CD8-positive, alpha-beta T cell (primary cell): ENCODE measurements at regions of chr10 and their contacts with region 1.

Region 1: GRCh38 chr10:119445311-119445934 is 97.1 kb downstream of the RGS10 start:
- DNase-seq: peak; percentile 67 to 93 (median 85)
- ATAC-seq: peak; percentile 80
- H3K4me3 ChIP-seq: no peak overlapping the region
- H3K4me3 Mint-ChIP-seq: no peak overlapping the region
- H3K27ac ChIP-seq: no peak overlapping the region
- H3K27ac Mint-ChIP-seq: peak overlapping the region; percentile 66
- H3K4me1 ChIP-seq: peaks cover 10% of the 10 kb centered on the region
- H3K4me1 Mint-ChIP-seq: peaks cover 11% of the 10 kb centered on the region
- H3K27me3 ChIP-seq: no peaks in the 10 kb centered on the region
- H3K27me3 Mint-ChIP-seq: no peaks in the 10 kb centered on the region
- CTCF ChIP-seq: peak; percentile 81

Region 2: GRCh38 chr10:118993214-118993613 is 452.2 kb before region 1 on chr10:
- CTCF ChIA-PET with region 1: no interaction called
- POLR2A ChIA-PET with region 1: no interaction called
- intact Hi-C with region 1: no loop called
- DNase-seq: no peak
- ATAC-seq: no peak
- H3K4me3 ChIP-seq: no peak overlapping the region
- H3K4me3 Mint-ChIP-seq: no peak overlapping the region
- H3K27ac ChIP-seq: no peak overlapping the region
- H3K27ac Mint-ChIP-seq: no peak overlapping the region
- H3K4me1 ChIP-seq: no peaks in the 10 kb centered on the region
- H3K4me1 Mint-ChIP-seq: no peaks in the 10 kb centered on the region
- H3K27me3 ChIP-seq: no peaks in the 10 kb centered on the region
- H3K27me3 Mint-ChIP-seq: peaks cover 3% of the 10 kb centered on the region
- CTCF ChIP-seq: no peak

Region 3: DNA sequence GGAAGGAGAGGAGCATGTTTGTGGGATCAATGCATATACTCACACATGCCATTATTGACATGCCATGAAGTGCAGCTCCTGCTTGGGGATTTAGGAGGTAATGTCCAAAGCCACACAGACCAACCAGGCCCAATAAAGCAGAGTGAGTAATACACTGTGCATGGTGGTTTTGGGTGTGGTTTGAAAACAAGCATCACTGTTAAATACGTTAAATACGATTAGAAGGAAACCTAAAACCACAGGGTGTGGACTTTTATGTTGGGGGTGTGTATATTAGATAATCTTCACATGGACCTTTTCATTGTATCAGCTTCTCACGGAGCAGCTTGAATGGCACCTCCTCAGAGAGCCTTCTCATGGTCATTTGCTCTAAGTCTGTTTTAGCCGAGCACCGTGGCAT is 354.5 kb before region 1 on chr10:
- CTCF ChIA-PET with region 1: no interaction called
- POLR2A ChIA-PET with region 1: no interaction called
- intact Hi-C with region 1: no loop called
- DNase-seq: peak; percentile 12 to 88 (median 47)
- ATAC-seq: peak; percentile 81
- H3K4me3 ChIP-seq: no peak overlapping the region
- H3K4me3 Mint-ChIP-seq: peak overlapping the region; percentile 54
- H3K27ac ChIP-seq: peak overlapping the region; percentile 51 to 55
- H3K27ac Mint-ChIP-seq: peak overlapping the region; percentile 95
- H3K4me1 ChIP-seq: peaks cover 18% of the 10 kb centered on the region
- H3K4me1 Mint-ChIP-seq: peaks cover 31% of the 10 kb centered on the region
- H3K27me3 ChIP-seq: no peaks in the 10 kb centered on the region
- H3K27me3 Mint-ChIP-seq: no peaks in the 10 kb centered on the region
- CTCF ChIP-seq: no peak

Region 4: DNA sequence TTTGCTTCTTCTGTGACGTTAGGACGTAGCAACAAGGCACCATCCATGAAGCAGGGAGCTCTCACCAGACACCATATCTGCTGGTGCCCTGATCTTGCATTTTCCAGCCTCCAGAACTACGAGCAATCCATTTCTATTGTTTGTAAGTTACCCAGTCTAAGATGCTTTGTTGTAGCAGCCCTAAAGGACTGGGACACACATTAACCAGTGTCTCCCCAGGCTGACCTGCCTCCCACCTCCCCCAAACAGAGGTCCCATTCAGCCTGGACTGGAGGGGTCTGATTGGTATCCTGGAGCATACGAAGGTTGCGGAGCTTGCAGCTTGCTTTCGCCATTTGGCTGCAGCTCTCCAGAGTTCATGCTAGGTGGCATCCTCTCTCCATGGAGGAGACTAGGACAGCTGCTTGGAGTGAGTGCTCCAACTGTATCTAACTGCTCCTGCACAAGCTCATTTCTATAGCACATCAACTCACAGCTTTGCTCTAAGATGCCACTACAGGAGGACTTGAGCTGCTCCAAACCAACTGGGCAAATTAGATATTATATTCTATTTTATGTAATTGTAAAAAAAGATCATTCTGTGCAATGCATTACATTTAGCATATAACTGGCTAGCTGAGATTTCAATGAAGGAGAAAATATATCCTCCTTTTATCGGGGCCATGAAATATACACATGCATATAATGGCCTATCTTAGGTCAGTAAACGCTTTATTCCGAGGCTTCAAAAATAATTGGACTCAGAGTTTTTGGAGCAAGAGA is 246.0 kb before region 1 on chr10:
- CTCF ChIA-PET with region 1: interaction called, 16 read pairs
- POLR2A ChIA-PET with region 1: no interaction called
- intact Hi-C with region 1: loop called (anchors 1 to 2 kb)
- DNase-seq: peak in 8 of 9 experiments; percentile 15 to 72 (median 46)
- ATAC-seq: peak; percentile 82
- H3K4me3 ChIP-seq: no peak overlapping the region
- H3K4me3 Mint-ChIP-seq: no peak overlapping the region
- H3K27ac ChIP-seq: no peak overlapping the region
- H3K27ac Mint-ChIP-seq: no peak overlapping the region
- H3K4me1 ChIP-seq: no peaks in the 10 kb centered on the region
- H3K4me1 Mint-ChIP-seq: peaks cover 7% of the 10 kb centered on the region
- H3K27me3 ChIP-seq: no peaks in the 10 kb centered on the region
- H3K27me3 Mint-ChIP-seq: no peaks in the 10 kb centered on the region
- CTCF ChIP-seq: peak; percentile 44

Region 5: GRCh38 chr10:119270762-119271366 is 174.6 kb before region 1 on chr10:
- CTCF ChIA-PET with region 1: no interaction called
- POLR2A ChIA-PET with region 1: no interaction called
- intact Hi-C with region 1: no loop called
- DNase-seq: peak; percentile 19 to 81 (median 60)
- ATAC-seq: no peak
- H3K4me3 ChIP-seq: peak overlapping the region; percentile 18 to 20
- H3K4me3 Mint-ChIP-seq: peak overlapping the region; percentile 58
- H3K27ac ChIP-seq: peak overlapping the region; percentile 9 to 100
- H3K27ac Mint-ChIP-seq: peak overlapping the region; percentile 97
- H3K4me1 ChIP-seq: peaks cover 42% of the 10 kb centered on the region
- H3K4me1 Mint-ChIP-seq: peaks cover 61% of the 10 kb centered on the region
- H3K27me3 ChIP-seq: no peaks in the 10 kb centered on the region
- H3K27me3 Mint-ChIP-seq: no peaks in the 10 kb centered on the region
- CTCF ChIP-seq: no peak

Region 6: GRCh38 chr10:119421887-119422681 is 23.3 kb before region 1 on chr10:
- CTCF ChIA-PET with region 1: interaction called, 18 read pairs
- POLR2A ChIA-PET with region 1: no interaction called
- intact Hi-C with region 1: no loop called
- DNase-seq: no peak
- ATAC-seq: no peak
- H3K4me3 ChIP-seq: no peak overlapping the region
- H3K4me3 Mint-ChIP-seq: no peak overlapping the region
- H3K27ac ChIP-seq: no peak overlapping the region
- H3K27ac Mint-ChIP-seq: no peak overlapping the region
- H3K4me1 ChIP-seq: no peaks in the 10 kb centered on the region
- H3K4me1 Mint-ChIP-seq: no peaks in the 10 kb centered on the region
- H3K27me3 ChIP-seq: no peaks in the 10 kb centered on the region
- H3K27me3 Mint-ChIP-seq: no peaks in the 10 kb centered on the region
- CTCF ChIP-seq: no peak

Region 7: DNA sequence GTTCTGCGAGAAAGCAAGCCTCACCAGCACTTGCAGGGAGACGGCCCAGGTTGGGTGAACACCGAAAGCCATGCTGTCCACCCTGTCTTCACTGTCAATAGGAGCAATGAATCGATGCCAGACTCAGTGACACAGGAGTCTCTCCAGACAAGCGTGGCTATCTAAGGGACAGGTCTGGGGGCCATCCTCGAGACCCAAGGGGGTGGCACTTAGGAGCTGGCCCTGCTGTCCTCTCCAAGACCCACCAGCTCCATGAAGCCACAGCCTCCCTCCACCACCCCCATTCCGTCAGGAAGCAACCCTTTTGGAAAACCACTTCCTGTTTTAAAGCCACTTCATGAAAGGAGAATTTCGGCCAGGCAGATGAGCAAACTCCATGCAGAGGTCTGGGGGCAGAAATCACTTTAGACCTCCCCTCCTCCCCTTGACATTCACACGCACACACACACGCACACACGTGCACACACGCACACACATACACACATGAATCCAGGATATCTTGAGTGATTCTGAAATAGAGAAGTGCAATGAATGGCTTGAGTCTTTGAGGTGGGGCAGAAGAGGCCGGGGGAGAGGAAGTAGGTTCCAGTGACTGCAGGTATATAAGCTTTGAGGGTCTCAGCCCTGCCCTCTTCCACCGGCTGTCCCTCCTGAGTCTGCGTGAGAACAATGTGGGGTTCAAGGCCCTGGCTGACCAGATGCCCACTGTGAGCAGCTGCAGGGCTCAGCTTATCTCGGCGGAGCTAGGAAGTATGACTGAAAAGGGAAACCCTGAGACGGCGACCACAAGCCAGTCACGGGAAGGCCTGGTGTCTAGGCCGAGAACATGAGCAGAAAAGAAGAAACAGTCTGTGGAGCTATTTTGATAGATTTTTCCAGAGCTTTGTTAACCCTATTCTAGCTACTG is 72.1 kb after region 1 on chr10:
- CTCF ChIA-PET with region 1: interaction called, 15 read pairs
- POLR2A ChIA-PET with region 1: no interaction called
- intact Hi-C with region 1: no loop called
- DNase-seq: peak in 6 of 9 experiments; percentile 57 to 74 (median 64)
- ATAC-seq: peak; percentile 24
- H3K4me3 ChIP-seq: peak overlapping the region; percentile 2 to 11
- H3K4me3 Mint-ChIP-seq: peak overlapping the region; percentile 76
- H3K27ac ChIP-seq: peak overlapping the region; percentile 25 to 83
- H3K27ac Mint-ChIP-seq: peak overlapping the region; percentile 93
- H3K4me1 ChIP-seq: peaks cover 70% of the 10 kb centered on the region
- H3K4me1 Mint-ChIP-seq: peaks cover 73% of the 10 kb centered on the region
- H3K27me3 ChIP-seq: no peaks in the 10 kb centered on the region
- H3K27me3 Mint-ChIP-seq: no peaks in the 10 kb centered on the region
- CTCF ChIP-seq: no peak